ENCODE measurements at regions of chr3 and their contacts with region 1.

Region 1: DNA sequence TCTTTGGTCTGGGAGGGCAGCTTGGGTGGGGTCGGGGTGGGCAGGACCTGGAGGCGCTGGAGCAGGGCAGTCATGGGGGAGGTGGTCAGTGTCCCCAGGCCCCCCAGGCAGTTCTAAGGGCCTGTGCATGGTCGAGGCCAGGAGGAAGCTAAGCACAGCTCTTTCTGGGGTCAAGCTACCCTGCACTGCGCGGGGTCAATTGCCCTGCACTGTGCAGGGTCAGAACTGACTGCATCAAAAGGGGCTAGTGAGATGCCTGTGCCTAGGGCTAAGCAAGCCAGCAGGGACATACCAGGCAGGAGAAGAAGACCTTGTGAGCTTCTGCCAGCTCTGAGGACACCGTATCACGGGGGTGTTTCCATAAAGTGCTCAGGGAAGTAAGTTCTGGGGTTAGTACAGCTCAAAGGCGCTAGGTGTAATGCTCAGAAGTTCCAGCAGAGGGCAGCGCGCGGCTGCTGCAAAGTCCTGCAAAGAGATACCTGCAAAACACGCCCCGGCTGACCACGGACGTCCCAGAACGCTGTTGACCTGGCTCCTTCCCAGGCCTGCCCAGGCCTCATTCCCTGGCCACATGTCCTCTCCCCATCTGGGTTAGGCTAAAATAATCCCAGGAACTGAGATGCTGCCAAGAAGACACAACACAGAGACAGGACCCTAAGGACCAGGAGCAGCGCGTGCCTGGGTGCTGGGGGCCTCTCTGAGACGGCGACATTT is 18.8 kb upstream of the IQSEC1 start:
- DNase-seq: peak; percentile 71 to 96
- H3K4me3 ChIP-seq: no peak overlapping the region
- H3K27ac ChIP-seq: no peak overlapping the region
- H3K4me1 ChIP-seq: peaks cover 0 to 4% (median 3%) of the 10 kb centered on the region in 4 experiments; a peak in 5 of 7 replicates
- H3K27me3 ChIP-seq: no peaks in the 10 kb centered on the region
- CTCF ChIP-seq: peak in 2 of 3 experiments; percentile 92 to 94; a peak in 3 of 4 replicates
- EP300 ChIP-seq: no peak
- POLR2A ChIP-seq: no peak
- RAD21 ChIP-seq: peak; percentile 94 to 95

Region 2: GRCh38 chr3:13110678-13111116 is 18.6 kb after region 1 on chr3:
- CTCF ChIA-PET with region 1: interaction called, 56 read pairs
- POLR2A ChIA-PET with region 1: no interaction called
- DNase-seq: no peak
- H3K4me3 ChIP-seq: no peak overlapping the region
- H3K27ac ChIP-seq: no peak overlapping the region
- H3K4me1 ChIP-seq: peaks cover 0 to 5% (median 0%) of the 10 kb centered on the region in 4 experiments; a peak in 1 of 7 replicates
- H3K27me3 ChIP-seq: no peaks in the 10 kb centered on the region
- CTCF ChIP-seq: no peak
- EP300 ChIP-seq: no peak
- POLR2A ChIP-seq: no peak
- RAD21 ChIP-seq: no peak

Region 3: DNA sequence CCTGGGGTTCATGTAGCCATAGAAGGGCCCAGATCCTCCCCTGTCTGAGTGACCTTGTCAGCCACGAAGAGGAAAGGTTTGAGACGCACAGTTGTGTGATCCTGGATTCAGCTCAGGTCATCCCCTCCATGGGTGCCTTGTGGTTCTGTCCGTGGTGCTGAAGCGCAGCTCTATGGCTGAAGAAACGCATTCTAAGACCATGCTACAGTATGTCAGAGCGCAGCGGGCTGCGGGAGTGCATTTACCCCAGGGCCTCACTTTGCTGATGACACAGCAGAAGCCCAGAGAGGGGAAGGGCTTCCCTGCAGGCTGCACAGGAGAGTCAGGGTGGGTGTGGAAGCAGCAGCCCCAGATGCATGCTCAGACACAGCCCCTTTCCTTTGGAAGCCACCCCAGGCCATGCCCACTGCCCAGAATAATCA is 49.9 kb after region 1 on chr3:
- CTCF ChIA-PET with region 1: interaction called, 16 read pairs
- POLR2A ChIA-PET with region 1: no interaction called
- DNase-seq: peak; percentile 38 to 83
- H3K4me3 ChIP-seq: no peak overlapping the region
- H3K27ac ChIP-seq: no peak overlapping the region
- H3K4me1 ChIP-seq: no peaks in the 10 kb centered on the region; a peak in 1 of 7 replicates
- H3K27me3 ChIP-seq: no peaks in the 10 kb centered on the region
- CTCF ChIP-seq: no peak
- EP300 ChIP-seq: no peak
- POLR2A ChIP-seq: no peak
- RAD21 ChIP-seq: no peak

Region 4: DNA sequence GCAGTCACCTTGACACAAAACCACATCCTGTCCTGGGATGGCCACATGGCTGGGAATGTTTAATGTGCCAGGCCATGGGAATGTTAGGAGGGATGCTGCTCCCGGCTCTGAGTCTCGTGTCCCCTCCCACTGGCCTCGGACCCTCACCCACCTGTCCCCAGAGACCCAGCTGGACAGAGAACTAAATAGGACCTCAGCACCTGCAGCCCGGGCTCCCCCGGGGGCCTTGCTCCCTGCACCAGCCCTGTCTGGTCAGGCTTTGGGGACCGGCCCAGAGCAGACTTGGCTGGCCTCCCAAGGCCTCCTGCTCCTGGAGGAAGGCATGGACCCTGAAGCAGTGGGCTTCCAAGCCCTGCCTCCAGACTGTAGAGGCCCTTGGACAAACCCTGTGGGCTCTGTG is 81.1 kb after region 1 on chr3:
- CTCF ChIA-PET with region 1: interaction called, 14 read pairs
- POLR2A ChIA-PET with region 1: no interaction called
- DNase-seq: no peak
- H3K4me3 ChIP-seq: no peak overlapping the region
- H3K27ac ChIP-seq: no peak overlapping the region
- H3K4me1 ChIP-seq: peaks cover 0 to 8% (median 7%) of the 10 kb centered on the region in 4 experiments; a peak in 6 of 7 replicates
- H3K27me3 ChIP-seq: no peaks in the 10 kb centered on the region
- CTCF ChIP-seq: no peak
- EP300 ChIP-seq: no peak
- POLR2A ChIP-seq: no peak
- RAD21 ChIP-seq: no peak

Region 5: DNA sequence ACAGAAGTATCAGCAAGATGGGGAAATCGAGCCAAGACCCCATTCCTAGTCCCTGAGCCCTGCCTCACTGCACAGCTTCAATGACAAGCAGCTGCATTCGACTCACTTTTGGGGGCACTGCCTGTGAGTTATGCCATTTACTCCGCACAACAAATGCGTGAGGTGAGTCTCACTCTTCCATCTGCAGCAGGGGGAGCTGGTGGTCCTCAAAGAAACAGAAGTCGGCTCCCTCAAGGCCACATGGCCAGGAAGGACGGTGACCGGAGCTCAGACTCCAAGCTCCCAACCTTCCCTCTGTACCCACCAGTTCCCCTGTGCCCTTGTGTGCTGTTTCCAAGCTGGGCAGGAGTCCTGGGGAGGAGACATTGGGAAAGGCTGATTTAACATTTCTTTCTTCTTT is 108.9 kb after region 1 on chr3:
- CTCF ChIA-PET with region 1: interaction called, 32 read pairs
- POLR2A ChIA-PET with region 1: no interaction called
- DNase-seq: peak in 1 of 2 experiments; percentile 19
- H3K4me3 ChIP-seq: no peak overlapping the region
- H3K27ac ChIP-seq: no peak overlapping the region
- H3K4me1 ChIP-seq: peaks cover 0 to 3% (median under 1%) of the 10 kb centered on the region in 4 experiments; a peak in 5 of 7 replicates
- H3K27me3 ChIP-seq: peaks cover 0 to 4% (median 3%) of the 10 kb centered on the region in 4 experiments; a peak in 4 of 7 replicates
- CTCF ChIP-seq: peak in 2 of 3 experiments; percentile 71 to 72; a peak in 3 of 4 replicates
- EP300 ChIP-seq: no peak
- POLR2A ChIP-seq: no peak
- RAD21 ChIP-seq: peak; percentile 81 to 85

Region 6: GRCh38 chr3:13229273-13229949 is 137.4 kb after region 1 on chr3:
- CTCF ChIA-PET with region 1: interaction called, 10 read pairs
- POLR2A ChIA-PET with region 1: no interaction called
- DNase-seq: peak in 1 of 2 experiments; percentile 59
- H3K4me3 ChIP-seq: no peak overlapping the region
- H3K27ac ChIP-seq: no peak overlapping the region
- H3K4me1 ChIP-seq: peaks cover 0 to 3% (median under 1%) of the 10 kb centered on the region in 4 experiments; a peak in 2 of 7 replicates
- H3K27me3 ChIP-seq: no peaks in the 10 kb centered on the region
- CTCF ChIP-seq: peak in 2 of 3 experiments; percentile 78 to 92; a peak in 3 of 4 replicates
- EP300 ChIP-seq: peak in 1 of 2 experiments; percentile 33; a peak in 1 of 3 replicates
- POLR2A ChIP-seq: no peak
- RAD21 ChIP-seq: peak; percentile 65 to 81

Region 7: GRCh38 chr3:13452490-13453335 is 360.7 kb after region 1 on chr3:
- CTCF ChIA-PET with region 1: interaction called, 19 read pairs
- POLR2A ChIA-PET with region 1: no interaction called
- DNase-seq: no peak
- H3K4me3 ChIP-seq: peak overlapping the region in 1 of 4 experiments; percentile 57; a peak in 2 of 8 replicates
- H3K27ac ChIP-seq: no peak overlapping the region
- H3K4me1 ChIP-seq: peaks cover 2 to 5% (median 4%) of the 10 kb centered on the region in 4 experiments; a peak in 5 of 7 replicates
- H3K27me3 ChIP-seq: no peaks in the 10 kb centered on the region
- CTCF ChIP-seq: peak in 2 of 3 experiments; percentile 43 to 48; a peak in 2 of 4 replicates
- EP300 ChIP-seq: no peak
- POLR2A ChIP-seq: no peak
- RAD21 ChIP-seq: peak; percentile 65 to 68